Mammary epithelial cell (primary cell): ENCODE measurements at regions of chr19 and their contacts with region 1.

Region 1: DNA sequence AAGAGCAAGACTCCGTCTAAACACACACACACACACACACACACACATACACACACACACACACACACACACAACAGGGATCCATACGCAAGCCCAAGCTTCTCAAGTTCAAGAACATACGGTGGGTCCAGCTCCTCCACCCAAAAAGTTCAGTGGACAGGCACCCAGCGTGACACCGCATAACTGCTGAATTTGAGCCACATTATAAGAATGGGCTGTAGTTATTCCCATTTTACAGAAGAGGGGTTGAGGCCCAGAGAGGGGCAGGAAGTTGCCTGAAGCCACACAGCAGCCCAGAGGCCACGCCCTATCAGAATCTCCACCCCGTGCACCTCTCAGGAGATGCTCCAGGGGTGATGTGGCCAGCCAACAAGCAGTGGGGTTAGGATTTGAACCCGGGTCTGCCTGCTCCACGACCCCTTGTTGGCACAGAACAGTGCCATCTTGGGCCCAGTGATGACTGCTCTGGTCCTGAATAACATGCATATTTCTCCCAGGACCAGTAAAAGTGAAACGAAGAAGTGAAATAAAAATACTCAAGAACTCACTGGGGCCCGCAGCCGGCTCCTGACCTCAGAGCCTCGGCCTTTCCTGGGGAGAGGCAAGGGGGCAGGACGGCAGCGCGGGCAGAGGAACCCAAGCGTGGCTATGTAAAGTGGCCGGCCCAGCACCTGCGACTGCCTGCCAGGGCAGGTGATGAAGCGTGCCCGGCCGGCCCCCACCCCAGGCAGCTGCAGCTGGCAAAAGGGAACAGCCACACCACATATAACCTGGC is 61.9 kb downstream of the AP1M1 start:
- DNase-seq: no peak
- H3K4me3 ChIP-seq: no peak overlapping the region
- H3K27ac ChIP-seq: no peak overlapping the region
- H3K4me1 ChIP-seq: no peaks in the 10 kb centered on the region
- H3K27me3 ChIP-seq: peaks cover 4% of the 10 kb centered on the region
- CTCF ChIP-seq: no peak

Region 2: GRCh38 chr19:16180611-16181010 is 79.0 kb before region 1 on chr19:
- CTCF ChIA-PET with region 1: no interaction called
- dilution Hi-C with region 1: no loop called
- in situ Hi-C with region 1: no loop called
- intact Hi-C with region 1: no loop called
- DNase-seq: peak; percentile 46
- H3K4me3 ChIP-seq: no peak overlapping the region
- H3K27ac ChIP-seq: no peak overlapping the region
- H3K4me1 ChIP-seq: no peaks in the 10 kb centered on the region
- H3K27me3 ChIP-seq: no peaks in the 10 kb centered on the region
- CTCF ChIP-seq: no peak

Region 3: DNA sequence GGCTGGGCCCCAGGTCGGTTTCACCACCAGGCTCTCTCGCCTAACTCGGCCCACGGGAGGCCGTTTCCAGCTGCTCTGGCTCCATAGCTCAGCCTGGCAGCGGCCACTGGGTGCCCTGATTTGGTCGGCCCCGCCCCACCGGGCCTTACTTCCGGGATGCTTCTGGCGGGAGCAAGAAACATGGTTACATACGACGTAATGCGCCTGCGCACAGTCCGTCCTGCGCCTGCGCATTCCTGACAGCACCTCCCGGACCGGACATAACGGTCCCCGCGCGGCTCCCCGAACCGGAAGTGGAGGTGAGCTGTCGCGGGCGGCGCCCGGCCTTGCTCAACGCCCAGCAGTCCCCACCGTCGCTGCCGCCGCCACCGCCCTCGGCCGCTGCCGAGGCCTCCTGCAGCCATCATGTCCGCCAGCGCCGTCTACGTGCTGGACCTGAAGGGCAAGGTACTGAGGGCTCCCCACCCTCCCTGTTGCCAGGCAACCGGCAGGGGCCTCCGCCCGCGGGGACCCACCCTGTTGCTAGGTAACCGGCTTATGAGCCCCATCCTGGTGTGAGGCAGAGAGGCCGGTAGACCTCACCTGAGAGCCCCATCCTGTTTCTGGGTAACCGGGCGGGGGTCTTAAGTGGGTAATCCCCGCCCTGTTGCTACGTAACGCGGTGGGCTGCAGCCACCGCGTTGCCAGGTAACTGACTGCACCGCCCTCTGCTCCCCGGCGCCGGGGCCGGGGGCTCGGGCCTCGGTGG is 61.8 kb before region 1 on chr19 and contains the start of gene AP1M1:
- CTCF ChIA-PET with region 1: no interaction called
- dilution Hi-C with region 1: loop called (anchors 10 kb)
- in situ Hi-C with region 1: no loop called
- intact Hi-C with region 1: no loop called
- DNase-seq: peak; percentile 96
- H3K4me3 ChIP-seq: peak within 1 kb of the TSS; percentile 86 to 99 (median 95)
- H3K27ac ChIP-seq: peak within 1 kb of the TSS; percentile 74
- H3K4me1 ChIP-seq: peaks cover 25% of the 10 kb centered on the region
- H3K27me3 ChIP-seq: no peaks in the 10 kb centered on the region
- CTCF ChIP-seq: no peak
- total RNA-seq, gene AP1M1: 60.7 to 66.1 TPM

Region 4: GRCh38 chr19:16233836-16234551 is 25.6 kb before region 1 on chr19:
- CTCF ChIA-PET with region 1: no interaction called
- dilution Hi-C with region 1: no loop called
- in situ Hi-C with region 1: no loop called
- intact Hi-C with region 1: no loop called
- DNase-seq: no peak
- H3K4me3 ChIP-seq: no peak overlapping the region
- H3K27ac ChIP-seq: no peak overlapping the region
- H3K4me1 ChIP-seq: no peaks in the 10 kb centered on the region
- H3K27me3 ChIP-seq: no peaks in the 10 kb centered on the region
- CTCF ChIP-seq: no peak